Mammary epithelial cell (primary cell): ENCODE measurements at regions of chr1 and their contacts with region 1.

Region 1: DNA sequence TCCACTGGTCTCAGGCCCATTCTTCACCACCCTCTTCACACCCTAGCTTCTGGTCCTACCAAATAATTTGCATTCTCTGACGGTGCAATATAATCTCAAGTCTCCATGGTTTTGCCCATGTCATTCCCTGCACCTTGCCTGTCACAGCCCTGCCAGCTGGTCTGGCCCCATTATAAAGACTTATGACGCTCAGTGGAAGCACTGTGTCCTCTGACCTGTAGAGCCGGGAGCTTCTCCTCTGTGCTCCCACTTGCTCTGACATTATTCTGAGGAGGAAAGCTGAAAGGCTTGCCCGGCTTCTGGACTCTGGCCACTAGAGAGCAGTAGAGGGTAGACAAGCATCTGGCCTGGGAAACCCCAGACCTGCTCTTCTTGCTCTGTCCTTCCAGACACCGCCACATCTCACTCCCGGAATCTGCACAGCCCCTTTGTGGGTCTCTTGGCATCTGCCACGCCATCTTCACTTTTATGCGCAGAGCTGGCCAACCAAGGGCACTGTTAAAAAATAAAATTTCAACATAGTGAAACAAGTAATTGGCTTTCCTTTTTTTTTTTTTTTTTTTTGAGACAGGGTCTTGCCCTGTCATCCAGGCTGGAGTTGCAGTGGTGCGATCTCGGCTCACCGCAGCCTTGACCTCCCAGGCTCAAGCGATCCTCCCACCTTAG is 44.4 kb downstream of the NENF start:
- DNase-seq: peak; percentile 75
- H3K4me3 ChIP-seq: no peak overlapping the region
- H3K27ac ChIP-seq: no peak overlapping the region
- H3K4me1 ChIP-seq: no peaks in the 10 kb centered on the region
- H3K27me3 ChIP-seq: no peaks in the 10 kb centered on the region
- CTCF ChIP-seq: peak; percentile 91 to 93

Region 2: GRCh38 chr1:212518188-212519054 is 41.3 kb after region 1 on chr1:
- CTCF ChIA-PET with region 1: no interaction called
- dilution Hi-C with region 1: no loop called
- in situ Hi-C with region 1: no loop called
- intact Hi-C with region 1: no loop called
- DNase-seq: peak; percentile 21
- H3K4me3 ChIP-seq: no peak overlapping the region
- H3K27ac ChIP-seq: no peak overlapping the region
- H3K4me1 ChIP-seq: peaks cover 10% of the 10 kb centered on the region
- H3K27me3 ChIP-seq: peaks cover under 1% of the 10 kb centered on the region
- CTCF ChIP-seq: no peak

Region 3: GRCh38 chr1:212558693-212559480 is 81.7 kb after region 1 on chr1:
- CTCF ChIA-PET with region 1: no interaction called
- dilution Hi-C with region 1: no loop called
- in situ Hi-C with region 1: no loop called
- intact Hi-C with region 1: loop called (anchors 2 kb)
- DNase-seq: peak; percentile 93
- H3K4me3 ChIP-seq: peak overlapping the region; percentile 59 to 78 (median 59)
- H3K27ac ChIP-seq: peak overlapping the region; percentile 88
- H3K4me1 ChIP-seq: peaks cover 6% of the 10 kb centered on the region
- H3K27me3 ChIP-seq: no peaks in the 10 kb centered on the region
- CTCF ChIP-seq: no peak

Region 4: GRCh38 chr1:212608209-212608955 is 131.2 kb after region 1 on chr1 and contains the start of gene ATF3:
- CTCF ChIA-PET with region 1: interaction called, 3 read pairs
- dilution Hi-C with region 1: no loop called
- in situ Hi-C with region 1: no loop called
- intact Hi-C with region 1: loop called (anchors 2 kb)
- DNase-seq: peak; percentile 99
- H3K4me3 ChIP-seq: peak within 1 kb of the TSS; percentile 69 to 76 (median 75)
- H3K27ac ChIP-seq: peak within 1 kb of the TSS; percentile 89
- H3K4me1 ChIP-seq: peaks cover 24% of the 10 kb centered on the region
- H3K27me3 ChIP-seq: no peaks in the 10 kb centered on the region
- CTCF ChIP-seq: no peak
- total RNA-seq, gene ATF3: 3.5 to 17.8 TPM

Region 5: DNA sequence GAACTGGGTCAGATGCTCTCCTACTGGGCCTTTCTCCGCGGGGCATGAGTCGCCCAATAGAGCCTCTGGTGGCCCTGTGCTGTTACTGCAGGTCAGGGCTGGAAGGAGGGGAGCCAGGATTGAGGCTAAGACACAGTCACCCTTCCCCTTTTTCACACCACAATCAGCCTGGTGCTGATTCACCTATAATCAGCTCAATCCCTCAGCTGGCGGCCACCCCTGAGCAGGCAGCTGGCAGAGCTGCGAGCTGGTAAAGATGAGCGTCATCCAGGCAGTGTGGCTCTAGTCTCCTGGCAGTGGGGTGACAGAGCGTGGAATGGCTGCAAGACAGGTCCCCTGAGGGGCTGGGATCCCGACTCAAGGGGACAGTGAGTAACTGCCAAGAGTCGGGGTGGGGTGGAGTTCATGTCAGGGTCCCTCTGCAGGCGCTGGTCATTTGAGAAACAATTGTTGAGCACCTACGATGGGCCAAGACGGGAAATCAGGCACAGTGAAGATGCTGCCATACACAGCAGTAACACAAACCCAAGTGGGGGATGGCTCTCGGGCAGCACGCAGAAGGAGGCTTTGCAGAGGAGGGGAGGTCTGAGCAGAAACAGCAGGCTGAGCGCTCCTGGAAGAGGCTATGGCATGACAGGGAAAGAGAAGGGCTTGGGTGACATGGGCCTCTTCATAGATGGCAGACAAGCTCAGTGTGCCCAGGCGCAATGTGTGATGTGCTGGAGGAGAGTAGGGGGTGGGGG is 153.2 kb after region 1 on chr1:
- CTCF ChIA-PET with region 1: no interaction called
- dilution Hi-C with region 1: no loop called
- in situ Hi-C with region 1: loop called in 1 of 2 experiments (anchors 10 kb)
- intact Hi-C with region 1: loop called (anchors 1 kb)
- DNase-seq: no peak
- H3K4me3 ChIP-seq: no peak overlapping the region
- H3K27ac ChIP-seq: no peak overlapping the region
- H3K4me1 ChIP-seq: no peaks in the 10 kb centered on the region
- H3K27me3 ChIP-seq: no peaks in the 10 kb centered on the region
- CTCF ChIP-seq: peak; percentile 77 to 82

Region 6: GRCh38 chr1:212699104-212699624 is 222.0 kb after region 1 on chr1:
- CTCF ChIA-PET with region 1: no interaction called
- dilution Hi-C with region 1: no loop called
- in situ Hi-C with region 1: no loop called
- intact Hi-C with region 1: loop called (anchors 2 kb)
- DNase-seq: no peak
- H3K4me3 ChIP-seq: peak overlapping the region; percentile 33 to 53 (median 52)
- H3K27ac ChIP-seq: no peak overlapping the region
- H3K4me1 ChIP-seq: peaks cover 20% of the 10 kb centered on the region
- H3K27me3 ChIP-seq: peaks cover 28% of the 10 kb centered on the region
- CTCF ChIP-seq: peak in 1 of 2 donors; percentile 52

Region 7: GRCh38 chr1:212782422-212783154 is 305.4 kb after region 1 on chr1:
- CTCF ChIA-PET with region 1: no interaction called
- dilution Hi-C with region 1: no loop called
- in situ Hi-C with region 1: no loop called
- intact Hi-C with region 1: loop called (anchors 1 kb)
- DNase-seq: peak; percentile 7
- H3K4me3 ChIP-seq: no peak overlapping the region
- H3K27ac ChIP-seq: no peak overlapping the region
- H3K4me1 ChIP-seq: no peaks in the 10 kb centered on the region
- H3K27me3 ChIP-seq: no peaks in the 10 kb centered on the region
- CTCF ChIP-seq: peak; percentile 52 to 57

Region 8: DNA sequence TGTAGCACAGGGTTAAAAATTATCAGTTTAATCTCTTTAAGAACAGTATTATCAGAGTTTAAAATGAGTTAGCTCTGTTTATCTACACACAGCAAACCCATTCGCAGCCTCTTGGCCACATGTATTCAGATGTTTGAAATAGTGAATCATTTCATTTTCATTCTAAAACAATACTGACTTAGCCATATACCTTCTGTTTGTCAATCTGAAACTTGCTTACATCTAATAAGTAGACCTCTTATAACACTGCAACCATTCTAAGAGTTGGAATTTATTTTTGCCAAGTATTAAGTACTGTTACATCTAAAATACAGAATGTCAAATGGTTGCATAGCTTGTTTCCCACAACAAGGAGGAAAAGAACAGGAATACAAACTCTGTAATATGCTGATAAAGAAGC is 513.1 kb after region 1 on chr1:
- CTCF ChIA-PET with region 1: no interaction called
- dilution Hi-C with region 1: loop called (anchors 25 kb)
- in situ Hi-C with region 1: loop called (anchors 25 kb)
- intact Hi-C with region 1: loop called (anchors 5 kb)
- DNase-seq: no peak
- H3K4me3 ChIP-seq: no peak overlapping the region
- H3K27ac ChIP-seq: no peak overlapping the region
- H3K4me1 ChIP-seq: peaks cover 4% of the 10 kb centered on the region
- H3K27me3 ChIP-seq: no peaks in the 10 kb centered on the region
- CTCF ChIP-seq: no peak